Adrenal gland (tissue), 19 donors: ENCODE measurements at regions of chr13 and their contacts with region 1.

Region 1: DNA sequence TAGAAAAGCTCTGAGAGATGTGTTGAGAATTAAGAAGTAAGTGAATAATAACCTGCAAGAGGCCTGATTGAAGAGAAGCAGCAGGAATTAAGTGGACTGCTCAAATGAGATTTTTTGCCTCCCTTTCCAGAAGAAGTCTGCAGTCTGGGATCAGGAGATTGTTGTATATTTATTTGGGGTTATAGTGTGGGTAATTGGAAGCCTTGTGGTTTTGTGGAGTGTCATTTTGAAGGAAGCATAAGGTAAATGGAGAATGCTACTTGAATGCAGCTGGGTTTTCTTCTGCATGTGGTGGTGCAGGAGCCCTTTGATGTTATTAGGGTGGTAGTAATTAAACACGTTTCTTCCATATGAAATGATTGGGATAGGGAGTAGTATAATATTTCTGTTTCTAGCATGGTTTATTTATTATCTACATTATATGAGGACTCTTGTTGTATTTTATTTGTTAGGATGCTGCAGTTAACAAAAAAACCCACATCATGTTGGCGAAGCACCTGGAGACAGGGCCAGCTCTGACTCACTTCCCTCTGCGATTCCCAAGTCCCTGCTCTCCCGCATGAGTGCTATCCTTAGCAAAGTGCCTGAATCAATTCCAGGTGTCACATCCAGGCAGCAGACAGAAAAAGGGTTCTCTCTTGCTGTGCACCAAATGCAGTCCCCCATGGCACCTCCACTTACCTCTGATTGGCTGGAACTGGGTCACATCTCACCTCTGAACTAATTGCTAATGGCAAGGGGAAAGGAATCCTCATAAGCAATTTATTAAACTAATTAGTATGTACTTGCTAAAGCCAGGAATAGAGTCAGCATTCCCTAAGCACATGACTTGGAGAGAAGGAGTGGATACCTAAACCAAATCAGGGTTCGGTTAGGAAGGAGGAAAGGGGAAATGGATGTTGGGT is 54.8 kb downstream of the DGKH start:
- DNase-seq: no peak
- H3K4me3 ChIP-seq: no peak overlapping the region
- H3K27ac ChIP-seq: no peak overlapping the region
- H3K4me1 ChIP-seq: no peaks in the 10 kb centered on the region
- H3K27me3 ChIP-seq: no peaks in the 10 kb centered on the region
- CTCF ChIP-seq: no peak
- POLR2A ChIP-seq: no peak

Region 2: GRCh38 chr13:41668130-41668757 is 435.0 kb before region 1 on chr13:
- intact Hi-C with region 1: loop called in 1 of 2 experiments (anchors 10 kb)
- DNase-seq: peak; percentile 63 to 89 (median 77)
- H3K4me3 ChIP-seq: no peak overlapping the region
- H3K27ac ChIP-seq: no peak overlapping the region
- H3K4me1 ChIP-seq: peaks cover 0 to 3% of the 10 kb centered on the region in 2 donors
- H3K27me3 ChIP-seq: no peaks in the 10 kb centered on the region
- CTCF ChIP-seq: peak; percentile 50 to 99 (median 94)
- POLR2A ChIP-seq: no peak